ENCODE measurements at regions of chr20 and their contacts with region 1.

Region 1: DNA sequence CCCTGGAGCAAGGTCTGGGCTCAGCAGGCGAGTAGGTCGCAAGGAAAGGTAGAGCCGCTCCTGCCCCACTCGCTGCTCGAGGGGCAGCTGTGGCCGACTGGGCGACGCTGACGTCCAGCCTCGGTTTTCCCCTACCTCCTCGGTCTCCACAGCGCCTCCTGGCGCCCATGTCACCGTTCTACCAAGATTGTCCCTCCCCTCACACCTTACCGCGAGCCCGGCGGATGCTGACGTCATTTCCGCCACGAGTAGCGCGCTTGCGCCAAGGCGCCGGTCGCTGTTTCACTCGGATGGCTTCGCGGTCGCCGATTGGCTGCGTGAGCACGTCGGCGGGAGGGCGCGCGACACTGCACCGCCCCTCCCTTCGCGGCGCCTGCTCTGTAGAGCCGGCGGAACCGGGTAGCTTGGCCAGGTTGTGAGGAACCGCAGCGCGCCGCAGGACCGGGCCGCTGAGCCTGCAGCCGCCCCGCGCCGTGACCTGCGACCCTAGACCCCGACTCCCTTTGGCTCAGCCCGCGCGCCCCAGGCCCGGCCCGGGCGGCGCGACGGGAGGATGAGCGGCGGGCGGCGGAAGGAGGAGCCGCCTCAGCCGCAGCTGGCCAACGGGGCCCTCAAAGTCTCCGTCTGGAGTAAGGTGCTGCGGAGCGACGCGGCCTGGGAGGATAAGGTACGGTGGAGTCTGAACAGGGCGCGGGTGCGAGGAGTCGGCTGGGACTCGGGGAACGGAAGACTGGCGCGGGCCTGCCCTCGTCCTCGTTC is at the start of gene RAB5IF:
- DNase-seq: peak; percentile 99
- total RNA-seq, gene RAB5IF: 50.2 TPM

Region 2: DNA sequence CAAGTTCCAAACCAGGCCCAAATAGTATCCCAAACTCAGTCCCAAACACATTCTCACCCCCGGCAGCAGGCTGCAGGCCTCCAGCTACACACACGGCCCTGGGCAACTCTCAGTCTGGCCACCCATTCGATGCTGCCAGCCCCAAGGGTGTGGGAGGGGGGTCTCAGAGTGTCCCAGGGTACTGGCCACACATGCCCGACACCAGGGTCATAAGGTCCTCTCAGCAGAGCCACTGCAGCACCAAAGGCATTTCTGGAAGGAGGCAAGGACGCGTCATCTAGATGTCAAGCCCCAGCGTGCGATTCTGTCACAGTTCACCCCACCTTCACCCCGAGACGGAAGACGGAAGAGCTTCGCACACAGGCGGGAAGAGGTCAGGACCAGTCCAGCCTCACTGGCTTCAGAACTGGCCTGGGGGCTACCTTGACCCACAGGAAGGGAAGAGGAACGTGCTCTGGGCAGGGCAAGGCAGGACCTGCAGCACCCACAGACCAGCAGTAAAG is 54.7 kb before region 1 on chr20:
- intact Hi-C with region 1: loop called (anchors 2 kb)
- DNase-seq: no peak

Region 3: DNA sequence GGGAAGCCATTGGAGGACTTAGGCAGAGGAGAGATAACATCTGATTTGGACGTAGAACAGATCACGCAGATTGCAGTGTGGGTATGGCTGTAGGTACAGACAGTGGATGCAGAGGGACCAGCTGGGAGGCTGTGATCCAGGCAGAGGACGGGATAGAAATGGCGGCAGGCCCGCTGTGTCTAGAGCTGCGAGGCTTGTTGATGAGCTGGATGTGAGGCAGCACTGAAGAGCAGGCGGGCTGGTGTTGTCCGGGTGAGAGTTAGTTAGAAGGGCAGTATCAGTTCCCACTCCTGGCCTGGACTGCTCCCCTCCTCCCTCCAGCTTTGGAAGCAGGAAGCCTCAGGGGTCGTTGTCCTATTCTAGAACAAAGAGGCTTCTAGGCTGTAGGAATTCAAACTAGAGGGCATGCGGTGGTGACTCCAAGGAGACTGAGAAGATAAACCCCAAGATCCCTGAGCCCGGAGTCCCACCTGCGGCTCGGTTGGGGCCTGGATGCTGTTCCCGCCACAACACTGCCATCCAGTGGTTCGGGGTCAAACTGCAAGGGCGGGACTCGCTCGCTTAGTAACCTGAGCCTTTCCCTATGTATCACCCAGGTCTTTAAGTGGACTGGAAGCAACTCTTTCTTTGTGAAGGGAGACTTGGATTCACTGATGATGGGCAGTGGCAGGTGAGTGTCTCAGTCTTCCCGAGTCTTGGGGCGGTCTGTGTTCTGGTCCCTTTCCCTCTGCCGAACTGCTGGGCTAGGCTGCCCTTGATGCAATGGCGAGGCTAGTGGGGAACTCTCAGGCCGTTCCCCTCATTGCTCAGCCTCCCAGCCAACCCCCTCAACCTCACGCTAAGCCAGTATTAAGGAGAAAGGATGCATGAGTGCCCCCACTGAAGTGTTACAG is 281.5 kb after region 1 on chr20:
- intact Hi-C with region 1: loop called (anchors 5 kb)
- DNase-seq: peak; percentile 90